Activated T-helper 2 cell treated with anti-CD3 and anti-CD28 coated beads, Interferon-gamma antibody, Interleukin-2, Interleukin-4, amounts not matched to agents 10 μg/mL and 5 μg/mL and 100 μg/mL, durations not matched to agents 14 hours and 24 hours and 36 hours (primary cell): ENCODE measurements at regions of chr14 and their contacts with region 1.

Region 1: DNA sequence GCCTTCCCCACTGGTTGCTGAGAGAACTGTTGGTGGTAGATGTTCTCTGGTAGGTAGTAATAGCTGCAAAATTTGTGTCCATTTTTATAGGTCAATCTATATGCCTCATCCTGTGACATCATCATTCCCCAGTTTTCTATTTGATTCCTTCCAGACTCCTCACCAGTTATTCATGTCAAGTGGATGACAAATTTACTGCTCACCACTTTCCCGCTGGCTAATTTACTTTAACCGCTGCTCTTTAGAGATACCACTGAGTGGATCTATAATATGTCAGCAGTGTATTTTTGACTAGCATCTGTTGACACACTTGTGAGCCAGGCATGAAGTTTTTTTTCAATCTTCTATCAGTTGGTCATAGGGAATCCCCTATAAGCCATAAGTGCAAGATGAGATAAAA is 24.6 kb downstream of the GPR65 start:
- DNase-seq: no peak
- H3K4me3 Mint-ChIP-seq: peak overlapping the region; percentile 2
- H3K27ac Mint-ChIP-seq: peak overlapping the region; percentile 72
- H3K4me1 Mint-ChIP-seq: peaks cover 52% of the 10 kb centered on the region
- H3K27me3 Mint-ChIP-seq: no peaks in the 10 kb centered on the region

Region 2: GRCh38 chr14:88044851-88045339 is 15.4 kb after region 1 on chr14:
- intact Hi-C with region 1: loop called (anchors 1 kb)
- DNase-seq: no peak
- H3K4me3 Mint-ChIP-seq: no peak overlapping the region
- H3K27ac Mint-ChIP-seq: peak overlapping the region; percentile 73
- H3K4me1 Mint-ChIP-seq: peaks cover 17% of the 10 kb centered on the region
- H3K27me3 Mint-ChIP-seq: no peaks in the 10 kb centered on the region

Region 3: DNA sequence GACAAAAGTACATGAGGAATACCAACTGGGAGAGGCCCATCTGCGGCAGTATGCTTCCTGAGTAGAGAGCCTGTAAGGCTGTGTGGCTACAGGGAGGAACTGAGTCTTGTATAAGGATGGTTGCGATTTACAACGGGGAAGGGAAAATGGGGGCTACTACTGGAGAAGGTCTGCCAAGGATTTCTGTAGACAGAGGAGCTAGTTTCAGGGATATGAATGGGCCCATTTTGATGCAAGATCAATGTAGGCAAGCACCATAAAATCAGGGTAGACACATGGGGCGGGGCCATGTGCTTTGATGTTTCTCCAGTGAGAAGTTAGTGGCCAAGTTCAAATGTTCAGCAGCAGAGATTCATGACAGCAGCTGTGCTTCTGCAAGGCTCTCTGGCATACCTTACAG is 124.8 kb after region 1 on chr14:
- intact Hi-C with region 1: no loop called
- DNase-seq: no peak
- H3K4me3 Mint-ChIP-seq: no peak overlapping the region
- H3K27ac Mint-ChIP-seq: no peak overlapping the region
- H3K4me1 Mint-ChIP-seq: no peaks in the 10 kb centered on the region
- H3K27me3 Mint-ChIP-seq: peaks cover 22% of the 10 kb centered on the region